ENCODE measurements at regions of chr1 and their contacts with region 1.

Region 1: GRCh38 chr1:28581536-28582247 is 10.4 kb upstream of the RAB42 start:
- DNase-seq: peak; percentile 96
- ATAC-seq: peak; percentile 90
- H3K4me3 Mint-ChIP-seq: peak overlapping the region; percentile 95
- H3K27ac Mint-ChIP-seq: peak overlapping the region; percentile 83
- H3K4me1 Mint-ChIP-seq: peaks cover 26% of the 10 kb centered on the region
- H3K27me3 Mint-ChIP-seq: no peaks in the 10 kb centered on the region

Region 2: GRCh38 chr1:28329395-28330153 is 252.1 kb before region 1 on chr1:
- POLR2A ChIA-PET with region 1: interaction called, 12 read pairs
- DNase-seq: peak; percentile 68
- ATAC-seq: peak; percentile 6
- H3K4me3 Mint-ChIP-seq: peak overlapping the region; percentile 97
- H3K27ac Mint-ChIP-seq: peak overlapping the region; percentile 96
- H3K4me1 Mint-ChIP-seq: peaks cover 32% of the 10 kb centered on the region
- H3K27me3 Mint-ChIP-seq: no peaks in the 10 kb centered on the region

Region 3: GRCh38 chr1:28494737-28495136 is 87.0 kb before region 1 on chr1:
- POLR2A ChIA-PET with region 1: no interaction called
- DNase-seq: no peak
- ATAC-seq: no peak
- H3K4me3 Mint-ChIP-seq: no peak overlapping the region
- H3K27ac Mint-ChIP-seq: peak overlapping the region; percentile 1
- H3K4me1 Mint-ChIP-seq: peaks cover 3% of the 10 kb centered on the region
- H3K27me3 Mint-ChIP-seq: no peaks in the 10 kb centered on the region

Region 4: GRCh38 chr1:28518000-28518744 is 63.5 kb before region 1 on chr1:
- POLR2A ChIA-PET with region 1: interaction called, 21 read pairs
- DNase-seq: peak; percentile 93
- ATAC-seq: peak; percentile 84
- H3K4me3 Mint-ChIP-seq: peak overlapping the region; percentile 98
- H3K27ac Mint-ChIP-seq: peak overlapping the region; percentile 92
- H3K4me1 Mint-ChIP-seq: peaks cover 32% of the 10 kb centered on the region
- H3K27me3 Mint-ChIP-seq: no peaks in the 10 kb centered on the region

Region 5: GRCh38 chr1:28591708-28592320 is 10.1 kb after region 1 on chr1 and contains the start of gene RAB42:
- POLR2A ChIA-PET with region 1: interaction called, 18 read pairs
- DNase-seq: no peak
- ATAC-seq: no peak
- H3K4me3 Mint-ChIP-seq: peak within 1 kb of the TSS; percentile 78
- H3K27ac Mint-ChIP-seq: no peak within 1 kb of the TSS
- H3K4me1 Mint-ChIP-seq: no peaks in the 10 kb centered on the region
- H3K27me3 Mint-ChIP-seq: peaks cover 12% of the 10 kb centered on the region
- total RNA-seq, gene RAB42: 0.50 to 0.79 TPM

Region 6: DNA sequence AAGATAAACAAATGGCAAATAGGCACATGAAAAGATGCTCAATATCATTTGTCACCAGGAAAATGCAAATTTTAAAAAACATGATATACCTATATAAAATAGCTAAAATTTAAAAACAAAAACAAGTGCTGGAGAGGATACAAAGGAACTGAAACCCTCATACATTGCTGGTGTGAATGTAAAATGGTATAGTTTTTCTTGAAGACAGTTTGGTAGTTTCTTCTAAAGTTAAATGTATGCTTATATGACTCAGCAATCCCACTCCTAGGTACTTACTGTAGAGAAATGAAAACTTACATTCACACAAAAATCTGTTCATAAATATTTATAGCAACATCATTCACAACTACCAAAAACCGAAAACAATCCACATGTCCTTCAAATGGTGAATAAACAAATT is 50.0 kb after region 1 on chr1:
- POLR2A ChIA-PET with region 1: no interaction called
- DNase-seq: no peak
- ATAC-seq: no peak
- H3K4me3 Mint-ChIP-seq: no peak overlapping the region
- H3K27ac Mint-ChIP-seq: no peak overlapping the region
- H3K4me1 Mint-ChIP-seq: peaks cover 4% of the 10 kb centered on the region
- H3K27me3 Mint-ChIP-seq: no peaks in the 10 kb centered on the region

Region 7: GRCh38 chr1:28668191-28668955 is 86.7 kb after region 1 on chr1 and contains the start of gene GMEB1:
- POLR2A ChIA-PET with region 1: interaction called, 33 read pairs
- DNase-seq: peak; percentile 92
- ATAC-seq: peak; percentile 76
- H3K4me3 Mint-ChIP-seq: peak within 1 kb of the TSS; percentile 91
- H3K27ac Mint-ChIP-seq: peak within 1 kb of the TSS; percentile 97
- H3K4me1 Mint-ChIP-seq: peaks cover 13% of the 10 kb centered on the region
- H3K27me3 Mint-ChIP-seq: no peaks in the 10 kb centered on the region
- total RNA-seq, gene GMEB1: 31.7 to 32.7 TPM